ENCODE measurements at regions of chr15 and their contacts with region 1.

Region 1: GRCh38 chr15:41557673-41558399 is 1.2 kb upstream of the TYRO3 start:
- DNase-seq: peak; percentile 67
- ATAC-seq: peak; percentile 50
- H3K4me3 ChIP-seq: no peak overlapping the region; the same call in 1 of the 2 replicates
- H3K27ac ChIP-seq: no peak overlapping the region
- H3K4me1 ChIP-seq: peaks cover 25% of the 10 kb centered on the region
- H3K27me3 ChIP-seq: no peaks in the 10 kb centered on the region
- CTCF ChIP-seq: peak; percentile 81
- POLR2A ChIP-seq: no peak
- RAD21 ChIP-seq: peak; percentile 87

Region 2: DNA sequence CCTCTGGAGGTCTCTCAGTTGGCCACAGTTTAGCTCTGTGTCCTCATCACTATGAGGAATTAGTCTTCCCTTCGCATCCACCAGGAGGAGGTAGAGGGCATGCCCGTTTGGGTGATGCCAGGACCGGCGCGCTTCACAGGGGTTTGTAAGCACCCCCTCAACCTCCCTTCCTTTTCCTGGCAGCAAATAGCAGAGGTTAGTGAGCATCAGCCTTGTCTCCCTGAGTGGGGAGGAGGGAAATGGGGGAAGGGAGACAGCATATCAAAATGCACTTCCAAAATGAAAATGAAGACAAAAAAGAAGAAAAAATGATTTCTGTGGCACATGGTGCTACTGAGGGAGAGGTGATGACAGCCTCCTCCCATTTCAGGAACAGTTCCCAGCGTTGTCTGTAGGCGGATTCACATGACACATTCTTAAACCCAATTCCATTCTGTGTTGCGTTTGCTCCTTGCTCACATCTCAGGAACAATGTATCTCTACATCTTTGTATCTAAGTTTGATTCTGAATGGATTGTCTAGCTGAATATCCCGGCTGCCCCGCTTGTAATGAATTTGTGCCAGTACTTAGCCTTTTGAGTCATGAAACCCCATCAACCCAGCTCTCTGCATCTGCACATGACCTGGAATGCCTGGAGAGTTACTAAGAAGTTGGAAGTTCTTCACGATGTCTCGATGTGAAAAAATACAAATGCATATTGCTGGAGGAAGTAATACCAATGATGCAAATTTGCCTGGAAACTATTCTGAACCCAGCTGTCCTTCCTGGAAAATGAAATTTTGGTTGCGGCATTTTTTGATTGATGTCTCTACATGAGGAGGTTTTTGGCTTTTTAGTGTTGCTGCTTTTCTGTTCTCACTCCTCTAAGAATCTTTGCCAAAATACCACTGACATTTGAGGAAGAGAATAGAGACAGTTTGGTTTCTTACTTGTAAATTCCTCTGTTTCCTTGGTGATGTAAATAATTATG is 46.4 kb after region 1 on chr15:
- CTCF ChIA-PET with region 1: interaction called, 8 read pairs
- POLR2A ChIA-PET with region 1: no interaction called
- dilution Hi-C with region 1: no loop called
- in situ Hi-C with region 1: no loop called
- intact Hi-C with region 1: loop called (anchors 5 kb)
- DNase-seq: peak; percentile 91
- ATAC-seq: peak; percentile 84
- H3K4me3 ChIP-seq: peak overlapping the region; percentile 31; the same call in 1 of the 2 replicates
- H3K27ac ChIP-seq: no peak overlapping the region
- H3K4me1 ChIP-seq: peaks cover 6% of the 10 kb centered on the region
- H3K27me3 ChIP-seq: no peaks in the 10 kb centered on the region
- CTCF ChIP-seq: peak; percentile 73
- POLR2A ChIP-seq: no peak
- RAD21 ChIP-seq: peak; percentile 71

Region 3: GRCh38 chr15:41746802-41747201 is 189.0 kb after region 1 on chr15:
- CTCF ChIA-PET with region 1: no interaction called
- POLR2A ChIA-PET with region 1: no interaction called
- dilution Hi-C with region 1: no loop called
- in situ Hi-C with region 1: no loop called
- intact Hi-C with region 1: loop called (anchors 10 kb)
- DNase-seq: peak; percentile 23
- ATAC-seq: no peak
- H3K4me3 ChIP-seq: no peak overlapping the region
- H3K27ac ChIP-seq: no peak overlapping the region
- H3K4me1 ChIP-seq: no peaks in the 10 kb centered on the region
- H3K27me3 ChIP-seq: no peaks in the 10 kb centered on the region
- CTCF ChIP-seq: no peak
- POLR2A ChIP-seq: no peak
- RAD21 ChIP-seq: no peak

Region 4: DNA sequence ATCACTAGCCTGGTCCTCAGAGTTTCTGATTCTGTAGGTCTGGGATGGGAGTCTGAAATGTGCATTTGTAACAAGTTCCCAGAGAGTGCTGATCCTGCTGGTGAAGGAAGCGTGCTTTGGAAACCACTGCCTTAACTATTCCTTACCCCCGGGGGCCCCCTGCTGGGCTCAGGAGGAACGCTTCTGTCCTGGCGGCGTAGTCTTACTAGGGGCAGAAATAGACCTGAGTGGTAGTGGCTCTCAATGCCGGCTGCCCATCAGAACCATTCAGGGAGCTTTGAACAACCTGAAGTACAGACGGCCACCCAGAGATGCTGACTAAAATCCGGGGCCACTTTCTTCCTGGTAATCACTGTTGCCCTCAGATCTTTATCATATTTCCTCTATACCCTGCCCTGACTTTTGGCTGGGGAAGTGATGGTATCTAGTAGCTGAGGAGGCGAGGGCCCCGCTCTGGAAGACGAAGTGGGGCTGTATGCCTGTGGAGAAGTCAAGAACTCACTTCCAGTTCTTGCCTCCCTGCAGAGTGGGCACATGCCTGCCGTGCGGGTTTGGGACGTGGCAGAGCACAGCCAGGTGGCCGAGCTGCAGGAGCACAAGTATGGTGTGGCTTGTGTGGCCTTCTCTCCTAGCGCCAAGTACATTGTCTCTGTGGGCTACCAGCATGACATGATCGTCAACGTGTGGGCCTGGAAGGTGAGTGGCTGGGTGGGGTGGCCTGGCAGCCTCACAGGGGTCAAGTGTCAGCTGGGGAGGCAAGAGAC is 253.8 kb after region 1 on chr15:
- CTCF ChIA-PET with region 1: no interaction called
- POLR2A ChIA-PET with region 1: no interaction called
- dilution Hi-C with region 1: no loop called
- in situ Hi-C with region 1: no loop called
- intact Hi-C with region 1: loop called (anchors 1 kb)
- DNase-seq: peak; percentile 81
- ATAC-seq: peak; percentile 100
- H3K4me3 ChIP-seq: no peak overlapping the region
- H3K27ac ChIP-seq: no peak overlapping the region
- H3K4me1 ChIP-seq: peaks cover 3% of the 10 kb centered on the region
- H3K27me3 ChIP-seq: no peaks in the 10 kb centered on the region
- CTCF ChIP-seq: peak; percentile 97
- POLR2A ChIP-seq: peak; percentile 62
- RAD21 ChIP-seq: peak; percentile 99

Region 5: GRCh38 chr15:41904541-41905005 is 346.7 kb after region 1 on chr15:
- CTCF ChIA-PET with region 1: no interaction called
- POLR2A ChIA-PET with region 1: no interaction called
- dilution Hi-C with region 1: no loop called
- in situ Hi-C with region 1: no loop called
- intact Hi-C with region 1: loop called (anchors 1 kb)
- DNase-seq: peak; percentile 65
- ATAC-seq: peak; percentile 98
- H3K4me3 ChIP-seq: no peak overlapping the region
- H3K27ac ChIP-seq: no peak overlapping the region
- H3K4me1 ChIP-seq: no peaks in the 10 kb centered on the region
- H3K27me3 ChIP-seq: no peaks in the 10 kb centered on the region
- CTCF ChIP-seq: peak; percentile 85
- POLR2A ChIP-seq: no peak
- RAD21 ChIP-seq: peak; percentile 92